ENCODE measurements at regions of chr4 and their contacts with region 1.

Region 1: GRCh38 chr4:158671915-158672806 is at the start of gene ETFDH:
- DNase-seq: peak; percentile 91 to 99 (median 98)
- ATAC-seq: peak; percentile 88
- H3K4me3 ChIP-seq: peak within 1 kb of the TSS; percentile 80
- H3K4me3 Mint-ChIP-seq: peak within 1 kb of the TSS; percentile 88 to 99 (median 96)
- H3K27ac ChIP-seq: peak within 1 kb of the TSS; percentile 93
- H3K27ac Mint-ChIP-seq: peak within 1 kb of the TSS; percentile 91 to 99 (median 97)
- H3K4me1 ChIP-seq: peaks cover 13 to 16% of the 10 kb centered on the region in 2 donors
- H3K4me1 Mint-ChIP-seq: peaks cover 6 to 43% (median 35%) of the 10 kb centered on the region in 7 donors
- H3K27me3 ChIP-seq: no peaks in the 10 kb centered on the region
- H3K27me3 Mint-ChIP-seq: peaks cover 0 to 3% (median 0%) of the 10 kb centered on the region in 5 donors
- total RNA-seq, gene ETFDH: 12.5 to 25.8 (median 17.5) TPM

Region 2: DNA sequence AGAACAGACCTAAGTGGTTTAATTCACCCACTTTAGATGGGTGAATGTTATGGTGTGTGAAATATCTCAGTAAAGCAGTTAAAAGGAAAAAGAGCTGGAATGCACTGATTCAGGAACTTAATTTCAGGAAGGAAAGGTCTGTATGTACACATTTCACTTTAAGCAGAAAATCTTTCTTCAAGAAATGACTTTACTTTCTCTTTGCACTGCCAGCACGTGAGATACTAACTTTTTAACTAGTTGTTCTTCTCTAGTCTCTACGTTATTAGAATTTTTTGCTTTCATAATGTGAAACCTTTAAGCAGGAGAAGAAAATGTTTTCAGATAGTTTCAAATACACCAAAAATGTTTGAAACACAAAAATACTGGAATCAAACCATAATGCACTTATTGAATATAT is 19.2 kb before region 1 on chr4:
- CTCF ChIA-PET with region 1: no interaction called
- POLR2A ChIA-PET with region 1: no interaction called
- intact Hi-C with region 1: loop called in 1 of 2 experiments (anchors 1 kb)
- DNase-seq: no peak
- ATAC-seq: no peak
- H3K4me3 ChIP-seq: no peak overlapping the region
- H3K4me3 Mint-ChIP-seq: peak overlapping the region in 9 of 10 donors; percentile 31 to 77 (median 64)
- H3K27ac ChIP-seq: no peak overlapping the region
- H3K27ac Mint-ChIP-seq: peak overlapping the region in 7 of 9 donors; percentile 10 to 80 (median 50)
- H3K4me1 ChIP-seq: no peaks in the 10 kb centered on the region
- H3K4me1 Mint-ChIP-seq: peaks cover 0 to 11% (median 6%) of the 10 kb centered on the region in 7 donors
- H3K27me3 ChIP-seq: no peaks in the 10 kb centered on the region
- H3K27me3 Mint-ChIP-seq: peaks cover 0 to 4% (median 2%) of the 10 kb centered on the region in 5 donors

Region 3: GRCh38 chr4:158722917-158723793 is 51.0 kb after region 1 on chr4 and contains the start of gene PPID:
- CTCF ChIA-PET with region 1: interaction called, 5 read pairs
- POLR2A ChIA-PET with region 1: interaction called, 4 read pairs
- intact Hi-C with region 1: loop called (anchors 1 kb)
- DNase-seq: peak; percentile 64 to 86 (median 71)
- ATAC-seq: peak; percentile 90
- H3K4me3 ChIP-seq: peak within 1 kb of the TSS; percentile 93
- H3K4me3 Mint-ChIP-seq: peak within 1 kb of the TSS; percentile 92 to 99 (median 98)
- H3K27ac ChIP-seq: peak within 1 kb of the TSS; percentile 89
- H3K27ac Mint-ChIP-seq: peak within 1 kb of the TSS; percentile 95 to 99 (median 99)
- H3K4me1 ChIP-seq: peaks cover 0 to 3% of the 10 kb centered on the region in 2 donors
- H3K4me1 Mint-ChIP-seq: peaks cover 16 to 47% (median 37%) of the 10 kb centered on the region in 7 donors
- H3K27me3 ChIP-seq: no peaks in the 10 kb centered on the region
- H3K27me3 Mint-ChIP-seq: peaks cover under 1 to 17% (median 7%) of the 10 kb centered on the region in 5 donors
- total RNA-seq, gene PPID: 13.4 to 46.1 (median 26.5) TPM

Measured in naive thymus-derived CD4-positive, alpha-beta T cell (primary cell).